Activated CD4-positive, alpha-beta memory T cell treated with anti-CD3 and anti-CD28 coated beads, Interleukin-2, amount 10 ng/mL, durations not matched to agents 7 days and 5 days (primary cell): ENCODE measurements at regions of chr11 and their contacts with region 1.

Region 1: GRCh38 chr11:12159351-12160099 is 49.1 kb downstream of the MICAL2 start:
- DNase-seq: no peak
- H3K4me3 Mint-ChIP-seq: no peak overlapping the region
- H3K27ac Mint-ChIP-seq: peak overlapping the region; percentile 33
- H3K4me1 Mint-ChIP-seq: peaks cover 73% of the 10 kb centered on the region
- H3K27me3 Mint-ChIP-seq: no peaks in the 10 kb centered on the region

Region 2: GRCh38 chr11:12110201-12110713 is 49.3 kb before region 1 on chr11 and contains the start of gene MICAL2:
- CTCF ChIA-PET with region 1: no interaction called
- POLR2A ChIA-PET with region 1: interaction called, 11 read pairs
- DNase-seq: peak; percentile 89
- H3K4me3 Mint-ChIP-seq: peak within 1 kb of the TSS; percentile 82
- H3K27ac Mint-ChIP-seq: peak within 1 kb of the TSS; percentile 97
- H3K4me1 Mint-ChIP-seq: peaks cover 63% of the 10 kb centered on the region
- H3K27me3 Mint-ChIP-seq: no peaks in the 10 kb centered on the region
- total RNA-seq, gene MICAL2: 135 to 143 TPM

Region 3: GRCh38 chr11:12174477-12175143 is 15.1 kb after region 1 on chr11:
- CTCF ChIA-PET with region 1: interaction called, 5 read pairs
- POLR2A ChIA-PET with region 1: interaction called, 16 read pairs
- DNase-seq: peak; percentile 26
- H3K4me3 Mint-ChIP-seq: peak overlapping the region; percentile 52
- H3K27ac Mint-ChIP-seq: peak overlapping the region; percentile 99
- H3K4me1 Mint-ChIP-seq: peaks cover 78% of the 10 kb centered on the region
- H3K27me3 Mint-ChIP-seq: no peaks in the 10 kb centered on the region

Region 4: GRCh38 chr11:12189543-12190235 is 30.2 kb after region 1 on chr11:
- CTCF ChIA-PET with region 1: interaction called, 4 read pairs
- POLR2A ChIA-PET with region 1: interaction called, 12 read pairs
- DNase-seq: peak; percentile 70
- H3K4me3 Mint-ChIP-seq: peak overlapping the region; percentile 58
- H3K27ac Mint-ChIP-seq: peak overlapping the region; percentile 83
- H3K4me1 Mint-ChIP-seq: peaks cover 67% of the 10 kb centered on the region
- H3K27me3 Mint-ChIP-seq: no peaks in the 10 kb centered on the region

Region 5: GRCh38 chr11:12200279-12201010 is 40.9 kb after region 1 on chr11:
- CTCF ChIA-PET with region 1: interaction called, 5 read pairs
- POLR2A ChIA-PET with region 1: interaction called, 19 read pairs
- DNase-seq: no peak
- H3K4me3 Mint-ChIP-seq: no peak overlapping the region
- H3K27ac Mint-ChIP-seq: peak overlapping the region; percentile 98
- H3K4me1 Mint-ChIP-seq: peaks cover 75% of the 10 kb centered on the region
- H3K27me3 Mint-ChIP-seq: no peaks in the 10 kb centered on the region